CD4-positive, alpha-beta T cell (primary cell): ENCODE measurements at regions of chr3 and their contacts with region 1.

Region 1: DNA sequence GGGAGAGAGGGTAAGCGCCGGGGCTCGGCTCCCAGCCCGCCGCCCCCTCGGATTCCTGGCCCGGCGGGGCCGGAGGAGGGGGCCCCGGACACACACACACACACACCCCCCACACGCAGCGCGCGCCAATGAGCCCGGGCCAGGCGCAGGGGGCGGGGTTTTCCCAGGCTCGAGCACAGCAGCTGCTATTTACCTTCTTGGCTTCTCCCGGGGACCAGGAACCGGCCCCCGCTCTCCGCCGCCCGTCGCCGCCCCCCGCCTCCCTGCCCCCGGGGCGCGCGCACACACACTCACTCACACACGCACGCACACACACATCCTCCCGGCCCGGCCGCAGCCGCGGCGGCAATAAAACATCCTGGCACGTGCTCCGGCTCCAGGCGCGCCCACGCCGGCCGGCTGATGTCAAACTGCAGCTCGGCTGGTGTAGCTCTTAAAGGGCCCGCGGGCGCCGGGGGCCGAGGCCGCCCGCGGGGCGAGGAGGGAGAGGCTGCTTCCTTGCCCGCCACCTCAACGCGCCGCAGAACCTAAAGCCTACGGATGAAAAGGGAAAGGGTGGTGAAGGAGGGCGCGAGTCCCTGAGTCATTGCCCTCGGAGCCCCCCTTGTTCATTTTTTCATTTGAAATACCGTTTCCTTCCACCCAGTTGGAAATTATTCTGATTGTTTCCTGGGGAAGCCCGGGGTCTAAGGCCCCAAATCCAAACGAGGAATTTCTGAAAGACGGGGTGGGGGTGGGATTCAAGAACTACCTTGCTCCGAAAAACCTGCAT is 1.0 kb upstream of the HES1 start:
- DNase-seq: peak; percentile 61 to 92 (median 76)
- ATAC-seq: peak; percentile 65
- H3K4me3 ChIP-seq: peak overlapping the region; percentile 52
- H3K4me3 Mint-ChIP-seq: peak overlapping the region; percentile 91
- H3K27ac ChIP-seq: peak overlapping the region in 1 of 2 donors; percentile 26
- H3K27ac Mint-ChIP-seq: peak overlapping the region; percentile 88
- H3K4me1 ChIP-seq: peaks cover 54% of the 10 kb centered on the region
- H3K4me1 Mint-ChIP-seq: peaks cover 60% of the 10 kb centered on the region
- H3K27me3 ChIP-seq: peaks cover 59 to 61% of the 10 kb centered on the region in 2 experiments
- H3K27me3 Mint-ChIP-seq: peaks cover 57% of the 10 kb centered on the region
- CTCF ChIP-seq: no peak

Region 2: DNA sequence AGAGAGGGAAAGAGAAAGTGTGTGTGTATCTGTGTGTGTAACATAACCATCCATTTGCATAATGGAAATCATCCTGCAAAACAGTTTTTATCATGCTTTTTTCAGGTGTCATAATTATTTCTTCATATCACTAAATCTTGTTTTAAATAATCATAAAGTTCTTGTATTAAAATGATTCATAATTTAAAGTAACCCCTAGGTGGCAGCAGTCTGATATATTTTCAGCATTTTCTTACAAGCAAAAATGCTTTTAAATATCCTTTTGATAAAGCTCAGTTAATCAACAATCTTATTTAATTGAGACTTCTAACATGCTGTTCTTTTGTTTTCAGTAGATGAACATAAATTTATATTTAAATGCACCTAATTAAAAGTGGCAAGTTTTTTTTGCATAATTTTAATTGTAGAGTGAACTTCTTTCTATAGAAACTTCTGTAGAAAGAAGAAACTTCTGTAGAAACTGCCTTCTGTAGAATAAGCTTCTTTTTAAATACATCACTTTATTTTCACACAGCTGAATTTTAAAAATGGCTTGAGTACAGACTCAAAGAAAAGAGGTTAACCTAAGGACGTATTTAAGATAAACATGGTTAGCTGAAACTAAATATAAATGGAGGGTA is 469.5 kb before region 1 on chr3:
- CTCF ChIA-PET with region 1: interaction called, 8 read pairs
- POLR2A ChIA-PET with region 1: no interaction called
- intact Hi-C with region 1: loop called (anchors 2 kb)
- DNase-seq: peak in 3 of 14 experiments; percentile 39 to 55 (median 45)
- ATAC-seq: no peak
- H3K4me3 ChIP-seq: no peak overlapping the region
- H3K4me3 Mint-ChIP-seq: no peak overlapping the region
- H3K27ac ChIP-seq: no peak overlapping the region
- H3K27ac Mint-ChIP-seq: no peak overlapping the region
- H3K4me1 ChIP-seq: no peaks in the 10 kb centered on the region
- H3K4me1 Mint-ChIP-seq: no peaks in the 10 kb centered on the region
- H3K27me3 ChIP-seq: no peaks in the 10 kb centered on the region
- H3K27me3 Mint-ChIP-seq: no peaks in the 10 kb centered on the region
- CTCF ChIP-seq: peak; percentile 71

Region 3: DNA sequence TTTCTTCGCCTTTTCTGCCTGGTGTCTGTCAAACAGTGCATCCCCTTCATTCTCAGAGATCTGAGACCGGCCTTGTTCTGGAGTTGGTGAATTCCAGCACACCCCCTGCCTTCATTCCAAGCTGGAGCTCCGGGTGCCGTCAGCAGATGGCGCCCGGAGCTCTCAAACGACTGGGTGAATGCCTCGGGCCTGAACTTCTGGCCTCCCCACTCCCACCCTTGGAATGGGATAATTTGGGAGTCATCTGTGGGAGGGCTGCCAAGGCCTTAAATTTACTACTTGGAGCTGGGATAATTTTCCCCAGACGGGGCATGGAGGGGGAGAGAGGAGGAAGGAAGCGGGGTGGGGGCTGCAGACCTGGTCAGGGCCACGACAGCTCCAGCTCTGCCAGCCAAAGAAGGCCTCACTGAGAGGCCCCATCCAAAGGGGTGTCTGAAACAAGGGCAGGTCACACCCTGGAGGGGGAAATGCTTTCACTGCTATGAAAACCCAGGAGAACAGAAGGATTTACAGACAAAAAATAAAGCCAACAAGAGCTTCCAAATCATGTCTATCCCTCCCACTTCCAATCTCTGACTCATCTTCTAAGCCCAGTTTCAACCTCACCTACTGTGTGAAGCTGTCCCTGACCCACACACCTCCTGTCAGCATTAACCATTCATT is 354.0 kb before region 1 on chr3:
- CTCF ChIA-PET with region 1: interaction called, 4 read pairs
- POLR2A ChIA-PET with region 1: interaction called, 3 read pairs
- intact Hi-C with region 1: loop called (anchors 1 kb)
- DNase-seq: peak in 8 of 14 experiments; percentile 7 to 53 (median 16)
- ATAC-seq: no peak
- H3K4me3 ChIP-seq: no peak overlapping the region
- H3K4me3 Mint-ChIP-seq: no peak overlapping the region
- H3K27ac ChIP-seq: no peak overlapping the region
- H3K27ac Mint-ChIP-seq: no peak overlapping the region
- H3K4me1 ChIP-seq: no peaks in the 10 kb centered on the region
- H3K4me1 Mint-ChIP-seq: peaks cover 9% of the 10 kb centered on the region
- H3K27me3 ChIP-seq: peaks cover 19 to 24% of the 10 kb centered on the region in 2 experiments
- H3K27me3 Mint-ChIP-seq: peaks cover 42% of the 10 kb centered on the region
- CTCF ChIP-seq: peak; percentile 49

Region 4: GRCh38 chr3:193971261-193971751 is 163.6 kb before region 1 on chr3:
- CTCF ChIA-PET with region 1: no interaction called
- POLR2A ChIA-PET with region 1: no interaction called
- intact Hi-C with region 1: loop called in 1 of 2 experiments (anchors 10 kb)
- DNase-seq: peak in 3 of 14 experiments; percentile 5 to 48 (median 42)
- ATAC-seq: peak; percentile 26
- H3K4me3 ChIP-seq: no peak overlapping the region
- H3K4me3 Mint-ChIP-seq: peak overlapping the region; percentile 23
- H3K27ac ChIP-seq: no peak overlapping the region
- H3K27ac Mint-ChIP-seq: no peak overlapping the region
- H3K4me1 ChIP-seq: no peaks in the 10 kb centered on the region
- H3K4me1 Mint-ChIP-seq: peaks cover 34% of the 10 kb centered on the region
- H3K27me3 ChIP-seq: peaks cover 5 to 10% of the 10 kb centered on the region in 2 experiments
- H3K27me3 Mint-ChIP-seq: peaks cover 22% of the 10 kb centered on the region
- CTCF ChIP-seq: no peak

Region 5: DNA sequence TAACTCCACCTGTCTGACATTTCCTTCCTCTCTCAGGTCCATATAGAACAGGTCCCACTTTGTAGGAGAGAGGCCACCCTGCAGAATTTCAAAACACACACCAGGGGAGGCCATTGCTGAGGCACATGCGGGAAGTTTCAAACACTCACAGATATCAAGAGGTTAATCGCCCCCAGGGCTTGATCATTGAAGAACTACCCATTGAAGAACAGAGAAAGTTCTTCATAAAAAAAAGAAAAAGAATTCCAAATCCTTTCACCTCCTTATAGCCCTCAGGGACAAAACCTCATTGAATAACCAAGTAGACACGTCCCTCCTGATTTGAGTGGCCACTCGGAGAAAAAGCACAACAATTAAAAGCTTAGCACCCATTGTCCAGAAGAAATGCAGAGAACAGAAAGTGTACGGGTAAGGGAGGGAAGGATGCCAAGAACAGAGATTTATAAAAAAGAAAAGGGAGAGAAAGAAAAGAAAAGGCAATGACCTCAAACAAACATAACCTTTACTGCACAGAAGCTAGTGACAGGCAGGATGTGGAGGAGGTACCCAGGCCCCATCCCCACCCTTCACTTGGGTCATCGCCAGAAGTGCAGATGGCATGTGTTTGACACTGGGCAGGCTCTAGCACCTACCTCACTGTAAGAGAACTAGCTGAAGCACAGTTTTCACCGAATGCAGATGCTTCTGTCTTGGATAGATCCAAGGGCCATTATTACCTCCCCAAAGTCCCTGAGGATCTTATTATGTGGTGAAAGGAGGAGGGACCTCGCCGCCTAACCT is 111.3 kb before region 1 on chr3:
- CTCF ChIA-PET with region 1: no interaction called
- POLR2A ChIA-PET with region 1: no interaction called
- intact Hi-C with region 1: no loop called
- DNase-seq: no peak
- ATAC-seq: peak; percentile 51
- H3K4me3 ChIP-seq: no peak overlapping the region
- H3K4me3 Mint-ChIP-seq: no peak overlapping the region
- H3K27ac ChIP-seq: no peak overlapping the region
- H3K27ac Mint-ChIP-seq: no peak overlapping the region
- H3K4me1 ChIP-seq: no peaks in the 10 kb centered on the region
- H3K4me1 Mint-ChIP-seq: peaks cover 21% of the 10 kb centered on the region
- H3K27me3 ChIP-seq: peaks cover 0 to 3% of the 10 kb centered on the region in 2 experiments
- H3K27me3 Mint-ChIP-seq: peaks cover 5% of the 10 kb centered on the region
- CTCF ChIP-seq: no peak

Region 6: GRCh38 chr3:194306109-194306686 is 171.3 kb after region 1 on chr3:
- CTCF ChIA-PET with region 1: interaction called, 3 read pairs
- POLR2A ChIA-PET with region 1: no interaction called
- intact Hi-C with region 1: loop called in 1 of 2 experiments (anchors 5 kb)
- DNase-seq: peak; percentile 17 to 80 (median 48)
- ATAC-seq: peak; percentile 67
- H3K4me3 ChIP-seq: peak overlapping the region; percentile 14
- H3K4me3 Mint-ChIP-seq: peak overlapping the region; percentile 56
- H3K27ac ChIP-seq: no peak overlapping the region
- H3K27ac Mint-ChIP-seq: peak overlapping the region; percentile 85
- H3K4me1 ChIP-seq: peaks cover 47% of the 10 kb centered on the region
- H3K4me1 Mint-ChIP-seq: peaks cover 38% of the 10 kb centered on the region
- H3K27me3 ChIP-seq: no peaks in the 10 kb centered on the region
- H3K27me3 Mint-ChIP-seq: no peaks in the 10 kb centered on the region
- CTCF ChIP-seq: no peak

Region 7: DNA sequence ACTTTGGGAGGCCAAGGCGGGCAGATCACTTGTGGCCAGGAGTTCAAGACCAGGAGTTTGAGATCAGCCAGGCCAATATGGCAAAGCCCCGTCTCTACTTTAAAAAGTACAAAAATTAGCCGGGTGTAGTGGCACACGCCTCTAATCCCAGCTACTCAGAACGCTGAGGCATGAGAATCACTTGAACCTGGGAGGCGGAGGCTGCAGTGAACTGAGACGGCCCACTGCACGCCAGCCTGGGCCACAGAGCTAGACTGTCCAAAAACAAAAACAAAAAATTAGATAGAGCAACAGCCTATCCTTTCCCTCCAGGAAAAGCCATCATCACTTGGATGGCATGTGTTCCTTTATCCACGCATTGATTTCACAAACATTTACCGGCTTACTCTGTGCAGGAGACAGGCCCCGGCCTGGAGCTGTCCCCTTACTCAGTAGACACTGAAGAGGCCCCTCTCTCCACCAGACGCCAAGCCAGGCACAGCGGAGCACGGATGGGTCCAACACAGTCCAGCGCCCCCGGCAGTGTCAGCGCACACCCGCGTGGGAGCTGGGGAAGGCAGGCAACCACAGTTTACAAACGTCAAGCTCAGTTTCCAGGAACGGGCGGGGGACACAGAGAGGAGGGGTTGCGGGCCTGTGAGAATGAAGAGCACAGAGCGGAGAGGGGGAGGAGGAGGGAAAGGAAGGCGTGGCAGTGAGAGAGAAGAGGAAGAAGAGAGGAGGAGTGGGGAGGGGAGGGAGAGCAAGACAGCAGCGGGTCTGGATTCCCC is 261.0 kb after region 1 on chr3:
- CTCF ChIA-PET with region 1: no interaction called
- POLR2A ChIA-PET with region 1: no interaction called
- intact Hi-C with region 1: loop called in 1 of 2 experiments (anchors 5 kb)
- DNase-seq: peak; percentile 40 to 81 (median 62)
- ATAC-seq: peak; percentile 79
- H3K4me3 ChIP-seq: peak overlapping the region; percentile 63
- H3K4me3 Mint-ChIP-seq: peak overlapping the region; percentile 90
- H3K27ac ChIP-seq: peak overlapping the region in 1 of 2 donors; percentile 50
- H3K27ac Mint-ChIP-seq: peak overlapping the region; percentile 94
- H3K4me1 ChIP-seq: peaks cover 39% of the 10 kb centered on the region
- H3K4me1 Mint-ChIP-seq: peaks cover 56% of the 10 kb centered on the region
- H3K27me3 ChIP-seq: peaks cover 0 to 10% of the 10 kb centered on the region in 2 experiments
- H3K27me3 Mint-ChIP-seq: no peaks in the 10 kb centered on the region
- CTCF ChIP-seq: no peak